SK-N-SH (cell line): ENCODE measurements at regions of chr17 and their contacts with region 1.

Region 1: GRCh38 chr17:7650509-7651096 is at the start of gene ATP1B2:
- DNase-seq: peak; percentile 95
- H3K4me3 ChIP-seq: peak within 1 kb of the TSS; percentile 47 to 50
- H3K27ac ChIP-seq: no peak within 1 kb of the TSS
- H3K4me1 ChIP-seq: peaks cover 0 to 7% of the 10 kb centered on the region in 2 experiments; a peak in 1 of 4 replicates
- H3K27me3 ChIP-seq: peaks cover 25% of the 10 kb centered on the region
- CTCF ChIP-seq: no peak
- EP300 ChIP-seq: no peak
- RAD21 ChIP-seq: no peak
- polyA plus RNA-seq, gene ATP1B2: 0.05 and 0.08 TPM in 2 replicates

Region 2: DNA sequence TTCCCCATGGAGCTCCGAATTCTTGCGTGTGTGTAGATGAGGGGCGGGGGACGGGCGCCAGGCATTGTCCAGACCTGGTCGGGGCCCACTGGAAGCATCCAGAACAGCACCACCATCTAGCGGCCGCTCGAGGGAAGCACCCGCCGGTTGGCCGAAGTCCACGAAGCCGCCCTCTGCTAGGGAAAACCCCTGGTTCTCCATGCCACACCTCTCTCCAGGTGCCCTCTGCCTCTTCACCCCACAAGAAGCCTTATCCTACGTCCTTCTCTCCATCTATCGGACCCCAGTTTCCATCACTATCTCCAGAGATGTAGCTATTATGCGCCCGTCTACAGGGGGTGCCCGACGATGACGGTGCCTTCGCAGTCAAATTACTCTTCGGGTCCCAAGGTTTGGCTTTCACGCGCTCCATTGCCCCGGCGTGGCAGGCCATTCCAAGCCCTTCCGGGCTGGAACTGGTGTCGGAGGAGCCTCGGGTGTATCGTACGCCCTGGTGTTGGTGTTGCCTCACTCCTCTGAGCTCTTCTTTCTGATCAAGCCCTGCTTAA is 89.5 kb before region 1 on chr17:
- CTCF ChIA-PET with region 1: no interaction called
- POLR2A ChIA-PET with region 1: no interaction called
- DNase-seq: peak; percentile 93
- H3K4me3 ChIP-seq: peak overlapping the region; percentile 88 to 90
- H3K27ac ChIP-seq: peak overlapping the region; percentile 85 to 88
- H3K4me1 ChIP-seq: peaks cover 17 to 54% of the 10 kb centered on the region in 2 experiments
- H3K27me3 ChIP-seq: no peaks in the 10 kb centered on the region
- CTCF ChIP-seq: peak; percentile 73
- EP300 ChIP-seq: no peak
- RAD21 ChIP-seq: peak; percentile 84

Region 3: DNA sequence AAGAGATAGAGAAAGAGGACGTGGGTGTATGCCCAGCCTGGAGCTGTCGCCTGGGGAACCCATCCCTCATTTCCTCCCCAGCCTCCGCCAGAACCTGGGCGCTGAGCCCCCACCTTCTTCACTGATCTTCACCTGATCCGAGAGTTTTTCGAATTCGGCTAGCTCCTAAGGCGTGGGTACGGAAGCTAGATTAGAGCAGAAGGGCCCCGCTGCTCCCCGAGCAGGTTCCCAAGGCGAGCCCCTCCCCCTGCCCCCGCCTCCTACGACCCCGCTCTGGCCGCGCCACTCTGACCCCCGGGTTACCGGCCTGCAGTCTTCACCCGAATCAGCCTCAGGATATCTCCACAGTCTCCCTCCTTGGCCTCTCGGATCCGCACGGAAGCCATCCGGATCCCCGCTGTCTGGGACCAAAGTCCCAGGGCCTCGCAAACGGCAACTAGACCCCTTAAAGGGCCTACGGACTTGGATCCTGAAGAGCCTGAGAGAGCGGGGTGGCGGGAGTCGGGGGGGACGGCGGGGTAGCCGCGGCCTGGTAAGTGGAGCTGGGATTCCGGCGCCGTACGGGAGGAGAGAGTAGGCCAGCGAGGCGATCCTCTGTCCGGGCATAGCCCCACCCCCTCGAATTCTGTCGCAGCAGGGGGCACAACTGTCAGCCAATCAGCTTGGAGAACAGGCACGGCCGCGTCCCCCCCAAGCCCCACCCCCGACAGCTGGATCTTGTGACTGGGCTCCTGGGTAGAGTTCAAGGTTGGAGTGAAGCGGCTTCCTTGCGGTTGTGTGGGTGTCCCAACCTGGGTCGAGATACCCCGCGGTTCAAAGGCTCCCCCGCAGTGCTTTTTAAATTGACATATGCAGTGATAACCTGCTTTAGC is 23.1 kb before region 1 on chr17 and contains the start of gene SAT2:
- CTCF ChIA-PET with region 1: interaction called, 55 read pairs
- POLR2A ChIA-PET with region 1: interaction called, 14 read pairs
- DNase-seq: peak; percentile 97
- H3K4me3 ChIP-seq: peak within 1 kb of the TSS; percentile 62 to 77
- H3K27ac ChIP-seq: peak within 1 kb of the TSS; percentile 85 to 88
- H3K4me1 ChIP-seq: peaks cover 0 to 20% of the 10 kb centered on the region in 2 experiments; a peak in 1 of 4 replicates
- H3K27me3 ChIP-seq: no peaks in the 10 kb centered on the region
- CTCF ChIP-seq: no peak
- EP300 ChIP-seq: no peak
- RAD21 ChIP-seq: no peak
- polyA plus RNA-seq, gene SAT2: 42.8 and 43.1 TPM in 2 replicates

Region 4: GRCh38 chr17:7673239-7673638 is 22.6 kb after region 1 on chr17:
- CTCF ChIA-PET with region 1: interaction called, 10 read pairs
- POLR2A ChIA-PET with region 1: interaction called, 3 read pairs
- DNase-seq: no peak
- H3K4me3 ChIP-seq: no peak overlapping the region; a peak in 1 of 4 replicates
- H3K27ac ChIP-seq: no peak overlapping the region
- H3K4me1 ChIP-seq: no peaks in the 10 kb centered on the region
- H3K27me3 ChIP-seq: no peaks in the 10 kb centered on the region
- CTCF ChIP-seq: peak; percentile 56
- EP300 ChIP-seq: no peak
- RAD21 ChIP-seq: peak; percentile 29; the same call in 1 of the 2 replicates

Region 5: GRCh38 chr17:7703584-7704479 is 53.2 kb after region 1 on chr17:
- CTCF ChIA-PET with region 1: no interaction called
- POLR2A ChIA-PET with region 1: no interaction called
- DNase-seq: peak; percentile 86
- H3K4me3 ChIP-seq: peak overlapping the region; percentile 75 to 80
- H3K27ac ChIP-seq: peak overlapping the region; percentile 47 to 86; a peak in 3 of 4 replicates
- H3K4me1 ChIP-seq: peaks cover 9 to 35% of the 10 kb centered on the region in 2 experiments
- H3K27me3 ChIP-seq: no peaks in the 10 kb centered on the region
- CTCF ChIP-seq: no peak
- EP300 ChIP-seq: 0 out of 4 replicates have a peak, but pooled peaks of 1 of the 2 experiments have one; percentile 26
- RAD21 ChIP-seq: no peak

Region 6: DNA sequence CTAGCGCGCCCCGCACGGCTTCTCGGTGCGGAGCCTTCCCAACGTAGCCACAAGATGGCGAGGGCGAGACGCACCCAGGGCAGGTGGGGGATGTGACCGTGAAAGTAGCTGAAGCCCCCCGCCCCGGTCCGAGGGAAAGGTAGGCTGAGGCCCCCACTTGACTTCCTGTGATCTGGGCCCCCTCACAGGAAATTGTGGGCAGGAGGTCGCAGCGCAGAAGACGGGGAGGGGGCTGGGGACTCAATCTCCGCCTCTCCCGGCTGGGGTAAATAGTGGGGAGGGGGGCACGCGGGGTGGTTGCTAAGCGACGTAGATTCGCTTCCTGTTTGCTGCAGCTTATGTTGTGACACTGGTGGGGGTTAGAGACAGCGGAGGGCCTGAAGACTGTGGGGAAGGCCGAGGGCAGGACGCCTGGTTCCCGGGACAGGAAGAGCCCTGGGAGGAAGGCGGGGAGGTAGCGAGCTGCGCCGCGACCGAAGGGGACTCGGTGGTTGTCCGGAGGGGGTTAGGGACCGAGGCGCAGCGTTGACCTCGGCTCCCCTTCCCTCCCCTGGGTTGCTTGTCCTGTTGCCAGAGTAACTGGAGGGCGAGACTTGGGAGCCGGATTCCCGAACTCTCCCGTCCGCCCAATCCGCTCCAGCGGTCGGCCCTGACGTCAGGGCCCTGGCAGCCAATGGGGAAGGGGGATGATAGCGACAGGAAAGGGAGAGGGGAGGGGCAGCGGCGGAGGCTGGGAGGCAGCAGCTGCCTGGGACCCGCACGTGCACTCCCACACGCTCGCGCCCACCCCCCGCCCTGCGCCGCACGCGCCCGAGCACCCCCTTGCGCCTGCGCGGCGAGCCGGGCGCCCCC is 184.6 kb after region 1 on chr17:
- CTCF ChIA-PET with region 1: no interaction called
- POLR2A ChIA-PET with region 1: no interaction called
- DNase-seq: peak; percentile 92
- H3K4me3 ChIP-seq: peak overlapping the region; percentile 90 to 97
- H3K27ac ChIP-seq: peak overlapping the region; percentile 98 to 99
- H3K4me1 ChIP-seq: peaks cover 21 to 27% of the 10 kb centered on the region in 2 experiments
- H3K27me3 ChIP-seq: peaks cover 7% of the 10 kb centered on the region; the same call in 1 of the 2 replicates
- CTCF ChIP-seq: peak; percentile 77
- EP300 ChIP-seq: no peak; a peak in 2 of 4 replicates
- RAD21 ChIP-seq: peak; percentile 75